Activated CD8-positive, alpha-beta memory T cell treated with anti-CD3 and anti-CD28 coated beads, Interleukin-2, amount 10 ng/mL, durations not matched to agents 7 days and 5 days (primary cell): ENCODE measurements at regions of chr1 and their contacts with region 1.

Region 1: DNA sequence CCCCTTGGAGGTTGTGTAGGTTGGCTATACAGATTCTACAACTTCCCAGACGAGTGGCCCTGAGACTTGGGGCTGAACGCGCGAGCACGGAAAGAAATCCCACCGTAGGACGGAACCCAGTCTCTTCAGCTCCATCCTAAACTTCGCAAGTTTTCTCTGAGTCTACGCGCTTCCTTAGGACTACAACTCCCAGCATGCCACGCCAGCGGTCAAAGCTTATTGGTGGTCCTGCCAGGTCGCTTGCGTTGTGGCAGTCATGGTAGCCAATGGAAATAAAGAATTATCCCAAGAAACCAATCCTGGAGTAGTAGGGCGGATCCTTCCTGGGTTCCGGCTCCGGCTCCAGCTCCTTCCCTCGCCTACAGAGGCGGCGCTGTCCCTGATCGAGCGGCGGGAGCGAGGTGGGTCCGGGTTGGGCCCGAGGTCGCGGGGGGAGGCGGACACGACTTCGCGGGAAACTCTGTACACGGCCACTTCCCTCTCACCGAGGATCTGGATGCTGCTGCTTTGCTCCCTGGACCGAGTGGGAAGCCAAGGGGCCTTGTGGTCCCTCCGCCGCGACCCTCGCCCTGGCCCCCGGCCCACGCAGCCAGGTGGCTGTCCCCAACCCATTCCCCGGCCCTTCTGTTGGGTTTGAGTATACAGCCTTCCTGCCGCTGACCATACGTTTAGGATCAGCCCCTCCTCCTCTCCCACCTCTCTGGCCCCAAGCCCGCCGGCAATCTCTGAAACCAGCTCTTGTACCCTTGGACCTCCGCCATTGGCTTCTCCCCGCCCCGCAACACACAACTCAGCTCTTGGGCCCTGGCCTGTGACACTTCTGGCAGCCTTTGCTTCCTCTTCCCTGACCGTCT is at the start of gene ZNF691:
- DNase-seq: peak; percentile 96
- ATAC-seq: peak; percentile 98
- H3K4me3 Mint-ChIP-seq: peak within 1 kb of the TSS; percentile 91
- H3K27ac Mint-ChIP-seq: peak within 1 kb of the TSS; percentile 81
- H3K4me1 Mint-ChIP-seq: peaks cover 34% of the 10 kb centered on the region
- H3K27me3 Mint-ChIP-seq: no peaks in the 10 kb centered on the region
- total RNA-seq, gene ZNF691: 9.8 to 13.9 TPM

Region 2: DNA sequence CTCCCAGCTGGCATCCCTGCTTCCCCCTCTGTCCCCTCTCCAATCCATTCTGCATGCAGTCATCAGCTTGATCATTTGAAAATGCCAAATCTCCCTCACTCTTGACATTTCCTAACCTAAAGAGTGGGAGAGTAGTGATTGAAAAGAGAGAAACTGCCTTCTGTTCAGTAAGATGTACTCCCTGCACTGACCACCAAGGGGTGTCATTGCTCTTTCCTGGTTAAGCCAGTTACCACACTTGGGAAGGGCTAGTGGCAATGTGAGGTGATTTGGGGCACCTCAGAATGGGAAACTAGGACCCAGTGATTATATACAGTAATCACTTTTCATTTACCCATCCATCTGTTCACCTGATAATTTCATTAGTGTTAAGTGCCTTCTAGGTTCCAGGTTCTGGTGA is 68.6 kb before region 1 on chr1:
- CTCF ChIA-PET with region 1: interaction called, 10 read pairs
- DNase-seq: peak; percentile 50
- ATAC-seq: peak; percentile 65
- H3K4me3 Mint-ChIP-seq: no peak overlapping the region
- H3K27ac Mint-ChIP-seq: no peak overlapping the region
- H3K4me1 Mint-ChIP-seq: peaks cover 32% of the 10 kb centered on the region
- H3K27me3 Mint-ChIP-seq: no peaks in the 10 kb centered on the region

Region 3: DNA sequence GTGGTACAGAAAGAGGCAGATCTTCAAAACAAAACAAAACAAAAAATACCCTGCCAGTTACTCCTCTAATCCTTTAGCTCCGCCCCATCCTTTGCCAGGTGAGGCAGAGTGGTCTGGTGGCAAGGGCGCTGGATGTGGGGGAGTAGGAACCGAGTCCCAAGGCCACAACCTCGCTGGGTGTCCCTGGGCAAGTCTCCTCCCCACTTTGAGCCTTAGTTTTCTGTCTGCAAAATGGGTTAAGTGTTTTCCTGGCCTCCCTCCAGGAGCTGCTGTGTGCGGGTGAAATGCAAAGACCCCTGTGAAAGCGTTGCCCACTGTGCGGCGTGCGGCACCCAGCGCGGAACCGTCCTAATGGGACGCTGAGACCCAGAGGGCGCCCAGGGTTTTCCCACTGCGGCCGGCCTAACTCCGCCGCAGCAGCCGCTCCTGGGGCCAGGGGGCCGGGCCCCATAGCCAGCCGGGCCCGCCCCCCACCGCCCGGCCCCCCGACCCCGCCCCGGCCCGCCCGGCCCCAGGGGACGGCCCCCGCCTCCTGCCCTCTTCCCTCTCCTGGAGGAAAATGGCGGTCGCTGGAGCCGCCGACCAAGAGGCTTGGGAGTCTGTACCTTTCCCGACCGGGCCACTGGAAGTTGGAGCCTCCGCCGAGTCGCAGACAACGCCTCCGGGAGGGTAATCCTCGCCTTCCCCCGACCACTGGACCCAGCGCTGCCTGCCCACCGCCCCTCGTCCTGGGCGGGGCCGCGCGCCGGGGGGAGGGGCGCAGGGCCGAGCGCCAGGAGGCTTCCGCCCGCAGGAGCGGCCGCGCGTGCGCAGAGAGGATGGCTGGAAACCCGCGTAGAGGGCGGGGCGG is 29.7 kb before region 1 on chr1 and contains the starts of genes ERMAP and SVBP:
- CTCF ChIA-PET with region 1: interaction called, 18 read pairs
- DNase-seq: peak; percentile 94
- ATAC-seq: peak; percentile 91
- H3K4me3 Mint-ChIP-seq: peak within 1 kb of the TSS; percentile 70
- H3K27ac Mint-ChIP-seq: peak within 1 kb of the TSS; percentile 80
- H3K4me1 Mint-ChIP-seq: peaks cover 19% of the 10 kb centered on the region
- H3K27me3 Mint-ChIP-seq: no peaks in the 10 kb centered on the region
- total RNA-seq, gene ERMAP: 3.7 to 4.1 TPM
- total RNA-seq, gene SVBP: 11.5 to 14.8 TPM

Region 4: DNA sequence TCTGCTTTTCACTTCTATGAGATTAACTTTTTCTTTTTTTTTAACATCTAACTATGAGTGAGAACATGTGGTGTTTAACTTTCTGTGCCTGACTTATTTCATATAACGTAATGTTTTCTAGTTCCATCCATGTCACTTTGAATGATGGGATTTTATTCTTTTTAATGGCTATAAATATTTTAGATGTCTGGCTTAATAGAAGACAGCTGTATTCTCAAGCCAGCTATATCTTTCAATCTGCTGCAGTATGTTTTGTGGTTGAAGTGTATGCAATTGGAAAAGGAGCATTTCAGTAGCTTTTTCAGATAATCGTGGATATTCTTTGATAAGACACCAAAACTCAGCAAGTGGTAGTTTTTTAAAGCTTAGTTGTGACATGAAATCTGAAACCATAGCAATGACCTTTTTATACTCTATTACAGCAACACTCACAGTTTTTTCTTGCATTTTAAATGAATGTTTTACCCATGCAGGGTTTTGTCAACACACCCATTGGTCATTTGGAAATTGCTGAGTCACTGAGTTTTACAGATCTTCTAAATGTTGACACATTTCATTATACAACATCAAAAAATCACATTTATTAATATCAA is 23.6 kb before region 1 on chr1:
- CTCF ChIA-PET with region 1: interaction called, 18 read pairs
- DNase-seq: no peak
- ATAC-seq: no peak
- H3K4me3 Mint-ChIP-seq: no peak overlapping the region
- H3K27ac Mint-ChIP-seq: no peak overlapping the region
- H3K4me1 Mint-ChIP-seq: peaks cover 13% of the 10 kb centered on the region
- H3K27me3 Mint-ChIP-seq: no peaks in the 10 kb centered on the region

Region 5: GRCh38 chr1:42873670-42874069 is 27.2 kb after region 1 on chr1:
- CTCF ChIA-PET with region 1: no interaction called
- DNase-seq: no peak
- ATAC-seq: no peak
- H3K4me3 Mint-ChIP-seq: no peak overlapping the region
- H3K27ac Mint-ChIP-seq: no peak overlapping the region
- H3K4me1 Mint-ChIP-seq: no peaks in the 10 kb centered on the region
- H3K27me3 Mint-ChIP-seq: peaks cover 23% of the 10 kb centered on the region

Region 6: GRCh38 chr1:42913426-42914091 is 67.1 kb after region 1 on chr1:
- CTCF ChIA-PET with region 1: interaction called, 15 read pairs
- DNase-seq: peak; percentile 76
- ATAC-seq: peak; percentile 75
- H3K4me3 Mint-ChIP-seq: no peak overlapping the region
- H3K27ac Mint-ChIP-seq: no peak overlapping the region
- H3K4me1 Mint-ChIP-seq: peaks cover 10% of the 10 kb centered on the region
- H3K27me3 Mint-ChIP-seq: peaks cover 2% of the 10 kb centered on the region

Region 7: DNA sequence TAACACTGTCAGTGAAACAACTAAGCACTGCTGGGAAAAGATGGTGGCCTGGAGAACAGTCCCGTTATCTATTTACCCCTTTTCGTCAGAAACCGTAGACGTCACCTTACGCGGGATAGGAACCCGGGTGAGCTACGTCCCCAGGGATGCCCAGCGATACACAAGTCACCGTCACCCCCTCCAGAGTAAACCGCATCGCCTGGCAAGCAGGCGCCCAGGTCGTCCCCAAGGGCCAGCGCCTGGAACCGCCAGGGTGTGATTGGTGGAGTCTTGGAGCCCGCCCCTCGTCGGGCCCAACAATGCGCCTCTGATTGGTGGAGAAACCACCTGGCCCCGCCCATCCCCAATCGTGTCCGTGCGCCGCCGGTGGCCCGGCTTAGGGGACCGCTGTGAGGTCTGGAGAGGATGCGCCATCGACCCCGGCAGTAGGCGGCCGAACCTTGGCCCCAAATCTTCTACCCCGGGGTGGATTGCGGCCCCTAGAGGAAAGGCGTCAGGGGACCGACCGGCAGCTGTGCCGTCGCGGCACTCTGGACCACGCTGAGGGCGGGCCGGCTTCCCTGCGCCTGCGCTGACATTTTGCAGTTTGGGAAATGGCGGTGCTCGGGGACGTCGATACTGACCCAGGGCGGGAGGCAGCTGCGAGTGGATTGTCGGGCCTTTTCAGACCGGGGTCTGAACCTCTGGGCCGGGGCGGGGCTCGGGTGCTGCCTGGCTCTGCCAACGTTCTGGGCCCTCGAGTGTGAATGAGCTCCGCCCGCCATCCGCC is 77.8 kb after region 1 on chr1:
- CTCF ChIA-PET with region 1: interaction called, 13 read pairs
- DNase-seq: peak; percentile 96
- ATAC-seq: peak; percentile 93
- H3K4me3 Mint-ChIP-seq: peak overlapping the region; percentile 86
- H3K27ac Mint-ChIP-seq: peak overlapping the region; percentile 88
- H3K4me1 Mint-ChIP-seq: peaks cover 48% of the 10 kb centered on the region
- H3K27me3 Mint-ChIP-seq: no peaks in the 10 kb centered on the region